ENCODE measurements at regions of chr11 and their contacts with region 1.

Region 1: DNA sequence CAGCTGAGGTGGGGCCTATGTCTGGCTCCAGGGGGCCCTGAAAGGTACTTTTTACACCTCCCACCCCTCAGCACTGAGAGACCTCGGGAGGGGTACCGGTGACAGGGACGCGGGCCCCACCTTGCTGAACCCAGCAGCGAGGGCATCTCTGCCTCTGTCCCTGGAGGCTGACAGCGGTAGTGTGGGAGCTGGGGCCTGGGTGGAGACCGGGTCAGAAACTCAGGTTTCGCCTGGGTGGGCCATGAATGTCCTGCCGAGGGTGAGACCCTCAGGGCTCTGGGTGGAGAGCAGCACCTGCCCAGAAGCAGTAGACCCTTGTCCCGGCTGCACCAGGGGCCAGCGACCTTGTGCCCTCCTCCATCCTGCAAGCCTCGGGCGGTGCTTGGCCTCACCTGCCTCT is 22.2 kb downstream of the PTDSS2 start:
- DNase-seq: no peak
- H3K4me3 Mint-ChIP-seq: no peak overlapping the region
- H3K27ac Mint-ChIP-seq: no peak overlapping the region
- H3K4me1 Mint-ChIP-seq: no peaks in the 10 kb centered on the region
- H3K27me3 Mint-ChIP-seq: no peaks in the 10 kb centered on the region

Region 2: GRCh38 chr11:369336-370018 is 102.8 kb before region 1 on chr11 and contains the start of gene B4GALNT4:
- CTCF ChIA-PET with region 1: no interaction called
- POLR2A ChIA-PET with region 1: no interaction called
- intact Hi-C with region 1: no loop called
- DNase-seq: no peak
- H3K4me3 Mint-ChIP-seq: peak within 1 kb of the TSS; percentile 65
- H3K27ac Mint-ChIP-seq: peak within 1 kb of the TSS; percentile 33
- H3K4me1 Mint-ChIP-seq: peaks cover 11% of the 10 kb centered on the region
- H3K27me3 Mint-ChIP-seq: peaks cover 36% of the 10 kb centered on the region
- total RNA-seq, gene B4GALNT4: 2.1 to 4.0 TPM

Region 3: DNA sequence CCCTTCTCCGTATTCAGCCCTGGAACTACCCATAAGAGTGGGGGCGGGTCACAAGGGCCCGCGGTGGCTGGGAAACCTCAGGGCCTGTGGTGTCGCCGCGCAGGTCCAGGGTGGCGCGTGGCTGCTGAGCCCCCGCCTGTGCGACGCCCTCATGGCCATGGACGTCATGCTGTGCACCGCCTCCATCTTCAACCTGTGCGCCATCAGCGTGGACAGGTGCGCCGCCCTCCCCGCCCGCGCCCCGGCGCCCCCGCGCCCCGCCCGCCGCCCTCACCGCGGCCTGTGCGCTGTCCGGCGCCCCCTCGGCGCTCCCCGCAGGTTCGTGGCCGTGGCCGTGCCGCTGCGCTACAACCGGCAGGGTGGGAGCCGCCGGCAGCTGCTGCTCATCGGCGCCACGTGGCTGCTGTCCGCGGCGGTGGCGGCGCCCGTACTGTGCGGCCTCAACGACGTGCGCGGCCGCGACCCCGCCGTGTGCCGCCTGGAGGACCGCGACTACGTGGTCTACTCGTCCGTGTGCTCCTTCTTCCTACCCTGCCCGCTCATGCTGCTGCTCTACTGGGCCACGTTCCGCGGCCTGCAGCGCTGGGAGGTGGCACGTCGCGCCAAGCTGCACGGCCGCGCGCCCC is 167.2 kb after region 1 on chr11:
- CTCF ChIA-PET with region 1: interaction called, 10 read pairs
- POLR2A ChIA-PET with region 1: no interaction called
- intact Hi-C with region 1: no loop called
- DNase-seq: no peak
- H3K4me3 Mint-ChIP-seq: no peak overlapping the region
- H3K27ac Mint-ChIP-seq: no peak overlapping the region
- H3K4me1 Mint-ChIP-seq: peaks cover 13% of the 10 kb centered on the region
- H3K27me3 Mint-ChIP-seq: peaks cover 27% of the 10 kb centered on the region